ENCODE measurements at regions of chr5 and their contacts with region 1.

Region 1: DNA sequence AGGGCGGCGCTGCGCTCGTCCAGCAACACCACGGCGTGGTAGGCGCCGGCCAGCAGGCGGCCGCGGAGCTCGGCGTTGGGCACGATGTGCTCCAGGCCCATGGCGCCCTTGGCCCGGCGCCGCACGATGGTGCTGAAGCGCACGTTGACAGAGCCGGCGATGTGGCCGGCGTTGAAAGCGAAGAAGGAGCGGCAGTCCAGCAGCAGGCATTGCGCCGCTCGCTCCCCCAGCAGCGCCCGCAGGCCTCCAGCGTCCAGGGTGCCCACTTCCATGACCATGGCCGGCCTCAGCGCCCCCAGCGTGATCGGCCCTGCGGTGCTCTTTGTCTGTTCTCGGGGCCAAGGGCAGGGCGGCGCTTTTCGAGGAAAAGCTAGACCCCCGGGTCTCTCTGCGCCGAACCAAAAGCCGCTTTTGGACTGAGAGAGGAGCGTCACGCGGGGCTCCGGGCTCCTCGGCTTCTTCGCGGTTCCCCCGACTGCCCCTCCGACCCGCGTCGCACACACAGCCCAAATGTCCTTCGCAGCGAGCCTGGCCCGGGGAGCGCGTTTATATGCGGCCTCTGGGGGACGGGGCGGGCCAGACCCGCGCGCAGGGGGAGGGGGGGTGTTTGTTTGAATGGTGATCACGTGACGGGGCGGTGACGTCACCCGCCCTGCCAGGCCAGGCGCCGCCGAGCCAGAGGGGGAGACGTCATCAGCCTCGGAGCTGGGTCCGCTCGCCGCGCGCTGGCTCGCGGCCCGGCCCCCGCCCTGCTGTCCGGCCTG is at the start of gene DUSP1:
- DNase-seq: peak; percentile 99
- ATAC-seq: peak; percentile 54
- H3K4me3 ChIP-seq: peak within 1 kb of the TSS; percentile 84 to 99 (median 99)
- H3K4me3 Mint-ChIP-seq: peak within 1 kb of the TSS; percentile 92
- H3K27ac ChIP-seq: peak within 1 kb of the TSS; percentile 100
- H3K27ac Mint-ChIP-seq: peak within 1 kb of the TSS; percentile 96
- H3K4me1 ChIP-seq: peaks cover 32 to 46% of the 10 kb centered on the region in 2 donors
- H3K4me1 Mint-ChIP-seq: peaks cover 70% of the 10 kb centered on the region
- H3K27me3 ChIP-seq: no peaks in the 10 kb centered on the region
- H3K27me3 Mint-ChIP-seq: no peaks in the 10 kb centered on the region
- CTCF ChIP-seq: peak; percentile 23
- total RNA-seq, gene DUSP1: 69.8 and 71.2 TPM in 2 replicates

Region 2: GRCh38 chr5:172006321-172007174 is 764.3 kb before region 1 on chr5 and contains the start of gene FBXW11:
- CTCF ChIA-PET with region 1: no interaction called
- POLR2A ChIA-PET with region 1: no interaction called
- intact Hi-C with region 1: loop called (anchors 10 kb)
- DNase-seq: peak; percentile 97
- ATAC-seq: peak; percentile 85
- H3K4me3 ChIP-seq: peak within 1 kb of the TSS; percentile 77 to 94 (median 90)
- H3K4me3 Mint-ChIP-seq: peak within 1 kb of the TSS; percentile 92
- H3K27ac ChIP-seq: peak within 1 kb of the TSS; percentile 96 to 97
- H3K27ac Mint-ChIP-seq: peak within 1 kb of the TSS; percentile 93
- H3K4me1 ChIP-seq: peaks cover 44 to 47% of the 10 kb centered on the region in 2 donors
- H3K4me1 Mint-ChIP-seq: peaks cover 49% of the 10 kb centered on the region
- H3K27me3 ChIP-seq: no peaks in the 10 kb centered on the region
- H3K27me3 Mint-ChIP-seq: no peaks in the 10 kb centered on the region
- CTCF ChIP-seq: no peak
- total RNA-seq, gene FBXW11: 62.4 and 64.8 TPM in 2 replicates

Region 3: DNA sequence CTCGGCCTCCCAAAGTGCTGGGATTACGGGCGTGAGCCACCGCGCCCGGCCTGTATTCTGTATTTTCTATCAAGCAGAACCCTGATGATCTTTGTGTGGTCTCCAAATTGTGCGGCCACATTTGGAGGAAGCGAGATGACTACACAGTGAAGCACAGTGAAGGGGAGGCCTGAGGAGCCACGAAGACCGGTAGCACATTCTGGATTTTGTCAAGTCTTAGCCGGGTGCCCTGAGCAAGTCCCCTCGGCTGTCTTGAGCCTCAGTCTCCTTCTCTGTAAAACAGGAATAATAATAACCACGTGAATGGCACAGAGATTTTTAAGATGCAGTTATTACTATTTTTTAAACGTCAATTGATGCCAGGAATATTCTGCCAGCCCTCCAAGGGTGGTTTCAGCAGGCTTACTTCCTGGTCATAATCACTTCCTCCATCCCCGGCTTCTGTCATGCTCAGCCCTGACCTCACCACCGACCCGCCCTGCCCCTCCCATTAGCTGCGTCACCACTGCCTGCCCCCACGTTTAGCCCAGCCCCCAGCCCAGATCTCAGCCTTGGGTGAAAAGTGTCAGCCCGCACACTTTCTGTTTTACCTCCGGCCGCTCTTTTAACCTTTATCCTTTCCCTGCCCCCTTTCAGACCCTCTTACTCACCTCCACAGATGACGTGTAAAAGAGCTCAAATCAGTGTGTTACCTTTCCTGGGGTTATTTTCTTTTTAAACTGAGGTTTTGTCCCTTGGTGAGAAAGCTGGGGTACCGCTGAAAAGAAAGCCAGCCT is 36.2 kb after region 1 on chr5:
- CTCF ChIA-PET with region 1: interaction called, 6 read pairs
- POLR2A ChIA-PET with region 1: interaction called, 29 read pairs
- intact Hi-C with region 1: loop called (anchors 1 kb)
- DNase-seq: peak; percentile 95
- ATAC-seq: peak; percentile 100
- H3K4me3 ChIP-seq: peak overlapping the region; percentile 57 to 70 (median 62)
- H3K4me3 Mint-ChIP-seq: peak overlapping the region; percentile 84
- H3K27ac ChIP-seq: peak overlapping the region; percentile 94 to 95
- H3K27ac Mint-ChIP-seq: peak overlapping the region; percentile 92
- H3K4me1 ChIP-seq: peaks cover 8 to 12% of the 10 kb centered on the region in 2 donors
- H3K4me1 Mint-ChIP-seq: peaks cover 13% of the 10 kb centered on the region
- H3K27me3 ChIP-seq: no peaks in the 10 kb centered on the region
- H3K27me3 Mint-ChIP-seq: no peaks in the 10 kb centered on the region
- CTCF ChIP-seq: no peak

Region 4: DNA sequence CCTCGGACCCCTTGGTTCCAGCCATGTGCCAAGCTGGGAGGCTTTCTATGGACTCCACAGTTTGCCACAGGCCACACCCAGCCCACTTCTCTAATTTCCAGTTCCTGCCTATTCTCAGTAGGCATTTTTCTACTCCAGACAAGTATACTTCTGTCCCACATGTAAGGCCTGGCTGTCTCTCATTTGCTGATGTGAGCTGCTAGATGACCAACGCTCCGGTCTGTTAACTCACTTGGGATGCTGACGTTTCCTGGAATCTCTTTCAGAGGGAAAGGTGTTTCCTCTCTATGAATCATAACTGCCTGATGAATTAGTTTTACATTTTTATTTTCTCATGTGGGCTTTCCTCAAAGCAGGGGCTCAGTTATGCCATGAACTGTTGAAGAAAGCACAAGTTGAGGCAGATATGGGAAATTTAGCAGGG is 99.4 kb after region 1 on chr5:
- CTCF ChIA-PET with region 1: interaction called, 11 read pairs
- POLR2A ChIA-PET with region 1: no interaction called
- intact Hi-C with region 1: no loop called
- DNase-seq: no peak
- ATAC-seq: no peak
- H3K4me3 ChIP-seq: no peak overlapping the region
- H3K4me3 Mint-ChIP-seq: no peak overlapping the region
- H3K27ac ChIP-seq: peak overlapping the region in 1 of 2 donors; percentile 60
- H3K27ac Mint-ChIP-seq: no peak overlapping the region
- H3K4me1 ChIP-seq: peaks cover 61 to 75% of the 10 kb centered on the region in 2 donors
- H3K4me1 Mint-ChIP-seq: peaks cover 35% of the 10 kb centered on the region
- H3K27me3 ChIP-seq: no peaks in the 10 kb centered on the region
- H3K27me3 Mint-ChIP-seq: no peaks in the 10 kb centered on the region
- CTCF ChIP-seq: no peak

Region 5: DNA sequence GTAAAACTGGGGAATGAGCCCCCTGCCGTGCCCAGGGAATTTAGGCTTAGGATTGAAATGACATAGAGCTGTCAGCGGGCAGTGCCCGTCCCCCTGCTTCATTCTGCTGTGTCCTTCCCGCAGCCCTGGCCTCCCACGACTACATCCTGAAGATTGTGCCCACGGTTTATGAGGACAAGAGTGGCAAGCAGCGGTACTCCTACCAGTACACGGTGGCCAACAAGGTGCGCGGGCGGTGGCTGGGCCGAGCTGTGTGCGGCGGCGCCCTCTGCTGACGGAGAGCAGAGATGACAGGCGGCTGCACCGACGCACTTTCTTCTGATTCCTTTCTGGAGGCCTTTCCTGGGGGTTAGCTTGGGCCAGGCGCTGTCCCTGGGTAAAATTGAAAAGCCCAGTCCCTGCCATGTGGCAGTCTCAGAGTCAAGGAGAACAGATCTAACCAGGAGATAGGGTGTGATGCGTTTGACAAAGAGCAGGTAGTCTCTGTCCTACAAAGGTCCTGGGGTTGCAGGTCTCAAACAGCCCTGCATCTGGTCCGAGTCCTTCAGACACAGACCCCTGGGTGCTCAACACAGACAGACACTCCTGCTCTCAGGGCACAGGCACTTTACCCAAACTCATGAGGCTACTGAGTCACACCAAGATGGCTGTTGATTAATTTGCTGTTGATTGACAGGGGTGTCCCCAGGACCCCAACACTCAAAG is 161.6 kb after region 1 on chr5:
- CTCF ChIA-PET with region 1: interaction called, 90 read pairs
- POLR2A ChIA-PET with region 1: interaction called, 4 read pairs
- intact Hi-C with region 1: loop called (anchors 1 kb)
- DNase-seq: peak; percentile 80
- ATAC-seq: peak; percentile 95
- H3K4me3 ChIP-seq: no peak overlapping the region
- H3K4me3 Mint-ChIP-seq: no peak overlapping the region
- H3K27ac ChIP-seq: no peak overlapping the region
- H3K27ac Mint-ChIP-seq: peak overlapping the region; percentile 78
- H3K4me1 ChIP-seq: peaks cover 0 to 6% of the 10 kb centered on the region in 2 donors
- H3K4me1 Mint-ChIP-seq: peaks cover 16% of the 10 kb centered on the region
- H3K27me3 ChIP-seq: no peaks in the 10 kb centered on the region
- H3K27me3 Mint-ChIP-seq: no peaks in the 10 kb centered on the region
- CTCF ChIP-seq: peak; percentile 96